Left colon (tissue), 2 donors: ENCODE measurements at regions of chr15 and their contacts with region 1.

Region 1: DNA sequence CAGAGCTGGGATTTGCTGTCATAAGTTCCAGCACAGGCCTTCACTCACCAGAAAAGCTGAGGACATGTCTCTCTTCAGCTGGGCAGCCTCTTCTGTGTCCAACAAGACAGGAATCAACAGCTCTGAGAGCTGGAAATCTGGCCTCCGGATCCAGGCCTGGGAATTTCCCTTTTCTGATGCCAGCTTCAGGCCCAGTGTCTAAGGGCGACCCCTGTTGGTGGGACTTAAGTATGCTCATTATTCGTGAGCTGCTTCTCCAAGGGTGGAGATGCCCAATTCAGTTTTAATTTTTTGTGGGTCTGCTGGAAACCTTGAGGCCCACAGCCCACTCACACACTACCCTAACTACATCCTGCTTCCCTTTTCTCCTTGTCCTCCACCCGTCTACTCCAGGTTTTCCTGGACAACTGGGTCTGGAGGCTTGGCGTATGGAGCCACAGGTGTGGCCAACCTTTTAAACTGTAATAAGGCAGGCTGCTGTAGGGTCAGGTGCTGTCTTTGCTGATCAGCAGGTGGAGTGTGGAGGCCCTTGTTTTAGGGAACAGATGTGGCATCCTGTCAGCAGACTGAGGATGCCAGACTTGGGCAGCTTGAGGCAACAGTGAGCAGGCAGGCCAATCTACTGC is 2.6 kb upstream of the CEMIP start:
- DNase-seq: peak; percentile 71 to 80
- ATAC-seq: peak; percentile 48

Region 2: DNA sequence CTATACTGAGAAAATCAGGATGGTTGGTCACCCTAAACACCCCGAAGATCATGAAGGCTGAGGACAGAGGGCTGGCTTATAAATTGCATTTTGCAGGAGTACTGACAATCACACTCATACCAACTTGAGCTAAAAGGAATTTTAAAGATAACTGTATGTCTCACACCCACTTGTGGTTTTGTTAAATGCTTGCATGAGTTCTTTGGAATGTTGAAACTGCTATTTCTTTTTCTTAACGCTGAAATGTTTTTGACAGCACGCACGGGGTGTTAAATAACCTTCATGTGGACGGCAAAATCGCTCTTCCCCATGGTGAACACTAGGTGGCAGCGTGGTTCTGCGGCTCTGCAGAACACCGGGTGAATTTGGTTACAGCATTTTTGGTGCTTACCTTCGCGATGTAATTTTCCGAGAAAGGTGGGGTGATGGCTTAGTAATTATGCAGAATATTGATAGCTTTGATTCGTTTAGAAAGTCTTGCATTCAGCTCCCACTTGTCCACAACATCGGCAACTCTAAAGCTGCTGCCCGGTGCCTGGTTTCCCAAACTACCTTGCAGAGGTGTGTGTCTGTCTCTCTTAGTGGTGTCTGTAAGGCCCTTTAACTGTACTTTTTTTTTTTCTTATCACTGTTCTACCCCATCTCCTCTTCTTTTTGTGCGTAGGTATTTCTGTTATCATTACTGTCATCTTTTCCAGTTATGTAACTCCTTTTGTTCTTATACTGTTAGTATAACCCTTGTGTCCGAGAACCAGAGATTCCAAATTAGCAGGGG is 320.7 kb before region 1 on chr15:
- intact Hi-C with region 1: loop called (anchors 5 to 10 kb)
- DNase-seq: peak in 1 of 2 donors; percentile 35
- ATAC-seq: peak; percentile 79

Region 3: GRCh38 chr15:80567721-80568157 is 208.8 kb before region 1 on chr15:
- intact Hi-C with region 1: loop called in 1 of 2 experiments (anchors 5 kb)
- DNase-seq: peak; percentile 41
- ATAC-seq: peak; percentile 94

Region 4: GRCh38 chr15:80967451-80967850 is 190.9 kb after region 1 on chr15:
- intact Hi-C with region 1: loop called in 1 of 2 experiments (anchors 10 kb)
- DNase-seq: no peak
- ATAC-seq: no peak